CD4-positive, alpha-beta memory T cell (primary cell): ENCODE measurements at regions of chr1 and their contacts with region 1.

Region 1: DNA sequence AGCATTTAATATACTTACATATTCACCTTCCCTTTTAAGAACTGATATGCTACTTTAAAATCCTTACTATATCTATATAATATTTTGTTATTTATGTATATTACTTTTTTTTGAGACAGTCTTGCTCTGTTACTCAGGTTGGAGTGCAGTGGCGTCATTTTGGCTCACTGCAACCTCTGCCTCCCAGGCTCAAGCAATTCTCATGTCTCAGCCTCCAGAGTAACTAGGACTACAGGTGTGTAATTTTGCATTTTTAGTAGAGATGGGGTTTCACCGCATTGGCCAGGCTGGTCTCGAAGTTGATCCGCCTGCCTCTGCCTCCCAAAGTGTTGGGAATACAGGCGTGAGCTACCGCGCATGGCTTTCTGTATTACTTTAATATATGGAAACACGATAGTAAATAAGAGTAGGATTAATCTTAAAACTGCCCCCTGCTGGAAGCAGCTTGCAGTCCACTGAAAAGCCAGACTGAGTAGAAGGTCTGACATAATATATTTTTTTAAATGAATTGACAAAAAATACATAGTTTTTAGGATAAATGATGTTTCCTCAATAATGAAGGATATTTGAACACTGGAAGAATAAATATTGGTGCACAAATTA is 24.4 kb downstream of the RCAN3 start:
- DNase-seq: peak; percentile 47 to 59 (median 53)
- H3K4me3 ChIP-seq: no peak overlapping the region
- H3K4me3 Mint-ChIP-seq: peak overlapping the region in 3 of 8 donors; percentile 36 to 58 (median 52)
- H3K27ac ChIP-seq: peak overlapping the region; percentile 31
- H3K27ac Mint-ChIP-seq: peak overlapping the region; percentile 65 to 94 (median 87)
- H3K4me1 ChIP-seq: peaks cover 71% of the 10 kb centered on the region
- H3K4me1 Mint-ChIP-seq: peaks cover 46 to 82% (median 63%) of the 10 kb centered on the region in 4 donors
- H3K27me3 ChIP-seq: no peaks in the 10 kb centered on the region
- H3K27me3 Mint-ChIP-seq: no peaks in the 10 kb centered on the region

Region 2: GRCh38 chr1:24321697-24322469 is 205.2 kb before region 1 on chr1:
- CTCF ChIA-PET with region 1: no interaction called
- POLR2A ChIA-PET with region 1: no interaction called
- intact Hi-C with region 1: no loop called
- DNase-seq: peak; percentile 56 to 84 (median 68)
- H3K4me3 ChIP-seq: peak overlapping the region; percentile 1 to 42
- H3K4me3 Mint-ChIP-seq: peak overlapping the region; percentile 80 to 92 (median 86)
- H3K27ac ChIP-seq: no peak overlapping the region
- H3K27ac Mint-ChIP-seq: peak overlapping the region; percentile 29 to 91 (median 84)
- H3K4me1 ChIP-seq: peaks cover 45% of the 10 kb centered on the region
- H3K4me1 Mint-ChIP-seq: peaks cover 36 to 65% (median 42%) of the 10 kb centered on the region in 4 donors
- H3K27me3 ChIP-seq: peaks cover 4% of the 10 kb centered on the region
- H3K27me3 Mint-ChIP-seq: peaks cover 19 to 29% of the 10 kb centered on the region in 2 donors

Region 3: DNA sequence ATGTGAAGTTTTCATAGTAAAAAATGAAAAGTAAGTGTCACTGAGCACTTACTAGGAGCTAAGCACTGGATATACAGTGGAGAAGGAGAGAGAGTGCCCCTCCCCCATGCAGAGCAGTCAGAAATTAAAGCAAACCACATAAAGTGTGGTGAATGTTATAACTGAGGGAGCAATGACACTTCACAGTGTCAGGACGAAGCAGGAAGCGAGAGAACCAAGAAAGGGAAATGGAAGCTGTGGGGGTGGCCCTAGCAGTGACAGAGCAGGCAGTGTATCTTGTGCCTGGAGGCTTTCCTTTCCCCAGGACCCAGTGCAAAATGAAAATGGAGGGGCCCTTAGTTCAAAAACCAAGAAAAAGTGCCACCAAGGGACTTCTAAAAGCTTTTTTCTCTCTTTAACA is 45.9 kb before region 1 on chr1:
- CTCF ChIA-PET with region 1: interaction called, 59 read pairs
- POLR2A ChIA-PET with region 1: interaction called, 20 read pairs
- intact Hi-C with region 1: loop called (anchors 1 kb)
- DNase-seq: peak; percentile 59 to 77 (median 67)
- H3K4me3 ChIP-seq: peak overlapping the region in 1 of 2 donors; percentile 50
- H3K4me3 Mint-ChIP-seq: peak overlapping the region; percentile 66 to 96 (median 86)
- H3K27ac ChIP-seq: peak overlapping the region; percentile 61
- H3K27ac Mint-ChIP-seq: peak overlapping the region; percentile 96 to 99 (median 99)
- H3K4me1 ChIP-seq: peaks cover 62% of the 10 kb centered on the region
- H3K4me1 Mint-ChIP-seq: peaks cover 42 to 72% (median 57%) of the 10 kb centered on the region in 4 donors
- H3K27me3 ChIP-seq: no peaks in the 10 kb centered on the region
- H3K27me3 Mint-ChIP-seq: no peaks in the 10 kb centered on the region

Region 4: GRCh38 chr1:24486331-24487065 is 40.5 kb before region 1 on chr1:
- CTCF ChIA-PET with region 1: interaction called, 59 read pairs
- POLR2A ChIA-PET with region 1: interaction called, 20 read pairs
- intact Hi-C with region 1: loop called (anchors 1 kb)
- DNase-seq: peak; percentile 72 to 79 (median 75)
- H3K4me3 ChIP-seq: peak overlapping the region in 1 of 2 donors; percentile 21
- H3K4me3 Mint-ChIP-seq: peak overlapping the region; percentile 66 to 88 (median 82)
- H3K27ac ChIP-seq: peak overlapping the region; percentile 58
- H3K27ac Mint-ChIP-seq: peak overlapping the region; percentile 92 to 98 (median 93)
- H3K4me1 ChIP-seq: peaks cover 82% of the 10 kb centered on the region
- H3K4me1 Mint-ChIP-seq: peaks cover 50 to 82% (median 63%) of the 10 kb centered on the region in 4 donors
- H3K27me3 ChIP-seq: no peaks in the 10 kb centered on the region
- H3K27me3 Mint-ChIP-seq: no peaks in the 10 kb centered on the region

Region 5: DNA sequence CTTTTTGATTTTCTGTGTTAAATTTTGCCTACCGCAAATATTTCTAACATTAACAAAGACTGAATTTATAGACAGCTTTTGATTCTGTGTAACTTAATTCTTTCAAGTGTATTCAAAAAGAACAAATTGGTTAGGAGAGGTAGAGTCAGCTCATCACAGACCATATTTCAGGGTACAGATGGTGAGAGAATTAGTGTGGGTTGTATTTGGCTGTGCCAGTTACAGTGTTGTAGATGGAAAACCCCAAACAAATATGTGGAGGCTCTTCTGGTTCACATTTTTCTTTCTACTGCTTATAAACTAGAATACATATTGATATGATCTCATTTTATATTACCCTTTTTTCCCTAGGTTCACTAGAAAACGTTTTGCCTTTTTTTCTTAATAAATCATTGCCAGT is 13.3 kb before region 1 on chr1:
- CTCF ChIA-PET with region 1: interaction called, 68 read pairs
- POLR2A ChIA-PET with region 1: interaction called, 9 read pairs
- intact Hi-C with region 1: no loop called
- DNase-seq: no peak
- H3K4me3 ChIP-seq: no peak overlapping the region
- H3K4me3 Mint-ChIP-seq: peak overlapping the region; percentile 7 to 65 (median 14)
- H3K27ac ChIP-seq: no peak overlapping the region
- H3K27ac Mint-ChIP-seq: peak overlapping the region; percentile 24 to 87 (median 44)
- H3K4me1 ChIP-seq: peaks cover 80% of the 10 kb centered on the region
- H3K4me1 Mint-ChIP-seq: peaks cover 56 to 88% (median 72%) of the 10 kb centered on the region in 4 donors
- H3K27me3 ChIP-seq: no peaks in the 10 kb centered on the region
- H3K27me3 Mint-ChIP-seq: no peaks in the 10 kb centered on the region

Region 6: GRCh38 chr1:24541711-24542346 is 14.8 kb after region 1 on chr1:
- CTCF ChIA-PET with region 1: interaction called, 21 read pairs
- POLR2A ChIA-PET with region 1: interaction called, 3 read pairs
- intact Hi-C with region 1: no loop called
- DNase-seq: no peak
- H3K4me3 ChIP-seq: no peak overlapping the region
- H3K4me3 Mint-ChIP-seq: peak overlapping the region in 1 of 8 donors; percentile 29
- H3K27ac ChIP-seq: no peak overlapping the region
- H3K27ac Mint-ChIP-seq: peak overlapping the region; percentile 53 to 83 (median 71)
- H3K4me1 ChIP-seq: peaks cover 62% of the 10 kb centered on the region
- H3K4me1 Mint-ChIP-seq: peaks cover 46 to 71% (median 57%) of the 10 kb centered on the region in 4 donors
- H3K27me3 ChIP-seq: no peaks in the 10 kb centered on the region
- H3K27me3 Mint-ChIP-seq: no peaks in the 10 kb centered on the region

Region 7: DNA sequence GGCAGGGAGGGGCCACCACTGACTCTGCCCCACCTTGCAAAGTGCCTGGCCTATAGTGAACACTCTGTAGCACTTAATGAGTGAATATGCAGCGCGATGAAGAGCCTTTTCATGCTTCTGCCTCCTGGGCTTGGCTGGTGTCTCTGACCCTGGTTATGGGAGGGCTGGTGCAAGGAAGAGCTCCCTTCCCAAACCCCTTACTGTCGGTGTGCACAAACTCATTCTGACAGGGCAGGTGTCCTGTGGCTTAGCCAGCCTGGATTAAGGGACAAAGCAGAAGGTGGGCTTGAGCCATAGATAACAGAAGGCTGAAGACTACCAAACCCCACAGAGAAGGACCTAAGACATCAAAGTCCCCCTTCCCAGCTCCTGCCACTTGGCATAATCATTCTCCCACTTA is 26.9 kb after region 1 on chr1:
- CTCF ChIA-PET with region 1: no interaction called
- POLR2A ChIA-PET with region 1: no interaction called
- intact Hi-C with region 1: no loop called
- DNase-seq: no peak
- H3K4me3 ChIP-seq: no peak overlapping the region
- H3K4me3 Mint-ChIP-seq: peak overlapping the region in 1 of 8 donors; percentile 43
- H3K27ac ChIP-seq: no peak overlapping the region
- H3K27ac Mint-ChIP-seq: peak overlapping the region in 2 of 7 donors; percentile 63 to 65
- H3K4me1 ChIP-seq: peaks cover 13% of the 10 kb centered on the region
- H3K4me1 Mint-ChIP-seq: peaks cover 4 to 16% (median 10%) of the 10 kb centered on the region in 4 donors
- H3K27me3 ChIP-seq: no peaks in the 10 kb centered on the region
- H3K27me3 Mint-ChIP-seq: peaks cover 4 to 10% of the 10 kb centered on the region in 2 donors